Head of caudate nucleus (tissue), 42 donors: ENCODE measurements at regions of chr1 and their contacts with region 1.

Region 1: DNA sequence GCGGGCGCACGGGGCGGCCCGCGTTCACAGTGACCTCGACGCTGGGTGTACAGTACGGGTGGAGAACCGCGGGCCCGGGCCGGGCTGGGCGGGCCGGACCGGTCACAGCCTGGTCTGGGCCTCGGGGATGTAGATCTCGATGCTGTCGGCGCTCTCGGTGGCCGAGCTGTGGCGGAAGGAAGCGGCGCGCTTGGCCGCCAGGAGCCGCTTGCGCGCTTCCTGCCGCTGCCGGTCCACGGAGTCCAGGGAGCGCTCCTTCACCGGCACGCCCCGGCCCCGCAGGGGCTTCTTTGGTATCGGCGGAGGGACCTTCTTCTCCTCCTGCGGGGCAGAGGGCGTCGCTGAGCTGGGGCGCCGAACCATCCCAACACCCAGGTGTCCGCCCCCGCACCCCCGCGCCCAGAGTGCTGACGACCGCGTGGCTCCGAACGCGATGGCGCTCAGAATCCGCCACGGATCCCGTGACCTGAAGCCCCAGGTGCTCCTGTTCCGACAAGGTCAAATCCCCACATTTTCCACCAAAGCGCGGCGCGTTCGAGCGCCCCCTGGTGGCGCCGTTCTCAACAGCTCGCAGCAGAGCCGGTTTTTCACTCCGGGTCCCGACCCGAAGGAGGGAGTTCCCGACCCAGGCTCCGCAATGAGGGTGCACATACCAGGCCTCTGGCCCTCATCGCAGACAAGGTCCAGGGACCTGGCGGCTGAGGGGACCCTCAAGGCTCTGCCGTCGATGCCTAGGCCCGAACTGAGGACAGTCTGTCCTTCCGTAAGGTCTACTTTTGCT is 6.6 kb upstream of the SMIM12 start:
- DNase-seq: peak; percentile 69 to 93 (median 86)

Region 2: GRCh38 chr1:34786521-34787325 is 79.4 kb before region 1 on chr1:
- intact Hi-C with region 1: loop called (anchors 5 kb)
- DNase-seq: peak; percentile 65 to 93 (median 82)